Activated T-helper 2 cell treated with anti-CD3 and anti-CD28 coated beads, Interferon-gamma antibody, Interleukin-2, Interleukin-4, amounts not matched to agents 10 μg/mL and 5 μg/mL and 100 μg/mL, durations not matched to agents 14 hours and 24 hours and 36 hours (primary cell): ENCODE measurements at regions of chr9 and their contacts with region 1.

Region 1: GRCh38 chr9:130669965-130670364 is 5.6 kb downstream of the PRDM12 start:
- DNase-seq: no peak
- H3K4me3 Mint-ChIP-seq: no peak overlapping the region
- H3K27ac Mint-ChIP-seq: no peak overlapping the region
- H3K4me1 Mint-ChIP-seq: peaks cover 3% of the 10 kb centered on the region
- H3K27me3 Mint-ChIP-seq: peaks cover 33% of the 10 kb centered on the region

Region 2: GRCh38 chr9:130940693-130941576 is 271.0 kb after region 1 on chr9:
- intact Hi-C with region 1: loop called (anchors 2 kb)
- DNase-seq: peak; percentile 61
- H3K4me3 Mint-ChIP-seq: no peak overlapping the region
- H3K27ac Mint-ChIP-seq: no peak overlapping the region
- H3K4me1 Mint-ChIP-seq: peaks cover 1% of the 10 kb centered on the region
- H3K27me3 Mint-ChIP-seq: peaks cover 37% of the 10 kb centered on the region